ENCODE measurements at regions of chr19 and their contacts with region 1.

Region 1: DNA sequence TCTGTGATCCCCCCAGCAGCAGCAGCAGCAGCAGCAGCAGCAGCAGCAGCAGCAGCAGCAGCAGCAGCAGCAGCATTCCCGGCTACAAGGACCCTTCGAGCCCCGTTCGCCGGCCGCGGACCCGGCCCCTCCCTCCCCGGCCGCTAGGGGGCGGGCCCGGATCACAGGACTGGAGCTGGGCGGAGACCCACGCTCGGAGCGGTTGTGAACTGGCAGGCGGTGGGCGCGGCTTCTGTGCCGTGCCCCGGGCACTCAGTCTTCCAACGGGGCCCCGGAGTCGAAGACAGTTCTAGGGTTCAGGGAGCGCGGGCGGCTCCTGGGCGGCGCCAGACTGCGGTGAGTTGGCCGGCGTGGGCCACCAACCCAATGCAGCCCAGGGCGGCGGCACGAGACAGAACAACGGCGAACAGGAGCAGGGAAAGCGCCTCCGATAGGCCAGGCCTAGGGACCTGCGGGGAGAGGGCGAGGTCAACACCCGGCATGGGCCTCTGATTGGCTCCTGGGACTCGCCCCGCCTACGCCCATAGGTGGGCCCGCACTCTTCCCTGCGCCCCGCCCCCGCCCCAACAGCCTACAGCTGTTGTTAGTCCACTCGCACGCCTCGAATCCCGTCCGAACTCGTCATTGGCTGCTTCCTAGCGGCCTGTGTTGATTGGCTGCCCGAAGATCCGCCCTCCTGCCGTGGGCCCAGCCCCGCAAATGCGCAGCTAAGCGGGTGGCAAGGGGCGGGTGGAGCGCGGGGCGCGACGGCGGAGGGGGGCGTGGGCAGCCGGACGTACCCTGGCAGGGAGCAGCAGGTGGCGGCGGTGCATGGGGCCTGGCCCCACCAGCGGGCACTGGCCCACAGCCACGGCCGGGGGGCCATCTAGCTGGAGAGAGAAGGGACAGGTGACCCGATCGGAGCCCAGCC is 1.4 kb upstream of the SIX5 start:
- DNase-seq: peak; percentile 98 to 99
- ATAC-seq: peak; percentile 57 to 64
- H3K4me3 ChIP-seq: peak overlapping the region; percentile 74 to 90 (median 82)
- H3K27ac ChIP-seq: peak overlapping the region; percentile 95 to 99 (median 97)
- H3K4me1 ChIP-seq: peaks cover 16 to 29% of the 10 kb centered on the region in 2 donors
- H3K27me3 ChIP-seq: no peaks in the 10 kb centered on the region
- CTCF ChIP-seq: peak; percentile 98 to 99 (median 99)
- POLR2A ChIP-seq: peak; percentile 65 to 79

Region 2: GRCh38 chr19:44746946-44747738 is 1023.3 kb before region 1 on chr19:
- in situ Hi-C with region 1: no loop called
- intact Hi-C with region 1: loop called (anchors 5 kb)
- DNase-seq: peak; percentile 92 to 97
- ATAC-seq: peak; percentile 86 to 88
- H3K4me3 ChIP-seq: peak overlapping the region; percentile 61 to 87 (median 72)
- H3K27ac ChIP-seq: peak overlapping the region; percentile 91 to 97 (median 95)
- H3K4me1 ChIP-seq: peaks cover 45 to 67% of the 10 kb centered on the region in 2 donors
- H3K27me3 ChIP-seq: no peaks in the 10 kb centered on the region
- CTCF ChIP-seq: no peak
- POLR2A ChIP-seq: peak; percentile 80

Region 3: GRCh38 chr19:45717166-45717982 is 53.1 kb before region 1 on chr19:
- in situ Hi-C with region 1: no loop called
- intact Hi-C with region 1: loop called (anchors 2 kb)
- DNase-seq: peak; percentile 99 to 100
- ATAC-seq: peak; percentile 96 to 98
- H3K4me3 ChIP-seq: peak overlapping the region; percentile 74 to 82 (median 76)
- H3K27ac ChIP-seq: peak overlapping the region; percentile 88 to 95 (median 92)
- H3K4me1 ChIP-seq: peaks cover 12 to 17% of the 10 kb centered on the region in 2 donors
- H3K27me3 ChIP-seq: no peaks in the 10 kb centered on the region
- CTCF ChIP-seq: peak in 3 of 5 experiments; percentile 26 to 42 (median 37)
- POLR2A ChIP-seq: peak; percentile 55 to 75

Region 4: GRCh38 chr19:45792470-45793177 is 22.2 kb after region 1 on chr19 and contains the start of gene DMWD:
- in situ Hi-C with region 1: no loop called
- intact Hi-C with region 1: loop called (anchors 1 kb)
- DNase-seq: peak; percentile 99
- ATAC-seq: peak; percentile 84 to 93
- H3K4me3 ChIP-seq: peak within 1 kb of the TSS; percentile 63 to 69 (median 64)
- H3K27ac ChIP-seq: peak within 1 kb of the TSS; percentile 57 to 84 (median 76)
- H3K4me1 ChIP-seq: peaks cover 30 to 33% of the 10 kb centered on the region in 2 donors
- H3K27me3 ChIP-seq: no peaks in the 10 kb centered on the region
- CTCF ChIP-seq: no peak
- POLR2A ChIP-seq: peak; percentile 84 to 87
- total RNA-seq, gene DMWD: 38.6 to 111 (median 56.4) TPM

Region 5: GRCh38 chr19:45862564-45863334 is 92.3 kb after region 1 on chr19 and contains the start of gene SYMPK:
- in situ Hi-C with region 1: no loop called
- intact Hi-C with region 1: loop called (anchors 2 kb)
- DNase-seq: peak; percentile 98 to 99
- ATAC-seq: peak; percentile 99
- H3K4me3 ChIP-seq: peak within 1 kb of the TSS; percentile 62 to 95 (median 86)
- H3K27ac ChIP-seq: peak within 1 kb of the TSS; percentile 85 to 95 (median 90)
- H3K4me1 ChIP-seq: peaks cover 17 to 22% of the 10 kb centered on the region in 2 donors
- H3K27me3 ChIP-seq: peaks cover 10 to 16% (median 10%) of the 10 kb centered on the region in 3 donors
- CTCF ChIP-seq: no peak
- POLR2A ChIP-seq: peak; percentile 62 to 82
- total RNA-seq, gene SYMPK: 14.1 to 64.6 (median 34.9) TPM

Measured in gastrocnemius medialis (tissue), 4 donors.